PC-3 (cell line): ENCODE measurements at regions of chr1 and their contacts with region 1.

Region 1: DNA sequence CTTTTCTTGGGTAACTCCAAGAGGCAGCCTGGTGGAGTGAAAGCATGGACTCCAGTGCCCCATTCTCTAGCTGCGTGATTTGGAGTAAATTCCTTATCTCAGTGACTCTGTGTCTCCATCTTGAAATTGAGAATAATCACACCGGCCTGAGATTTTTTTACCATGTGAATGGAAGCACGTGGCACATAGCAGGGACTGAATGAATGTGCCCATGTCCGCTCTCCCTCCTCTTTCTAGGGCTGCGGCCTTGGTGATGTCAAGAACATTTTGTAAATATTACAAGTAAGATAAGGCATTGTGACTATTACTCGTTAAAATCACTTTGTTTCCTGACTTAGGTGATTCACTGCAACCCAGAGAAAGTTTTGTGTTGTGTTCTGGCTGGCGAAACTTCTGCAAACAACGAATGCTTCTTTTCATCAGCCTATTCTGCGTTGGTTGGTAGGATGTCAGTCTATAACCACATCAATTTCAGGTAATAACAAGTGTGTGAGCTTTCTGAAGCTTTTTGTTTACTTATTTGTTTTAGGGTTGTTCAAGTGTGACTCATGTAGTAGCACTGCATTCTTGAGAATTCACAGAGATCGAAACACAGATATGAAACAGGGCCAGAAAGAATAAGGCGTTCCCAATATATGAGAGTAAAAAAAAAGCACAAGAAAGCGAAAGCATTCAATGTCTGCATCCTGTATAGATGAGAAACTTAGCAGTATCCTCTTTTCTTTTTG is 135.7 kb upstream of the SLC45A1 start:
- DNase-seq: peak; percentile 98
- ATAC-seq: peak; percentile 90
- H3K4me3 ChIP-seq: no peak overlapping the region
- H3K27ac ChIP-seq: peak overlapping the region; percentile 99
- H3K4me1 ChIP-seq: peaks cover 27% of the 10 kb centered on the region
- H3K27me3 ChIP-seq: no peaks in the 10 kb centered on the region
- CTCF ChIP-seq: no peak

Region 2: DNA sequence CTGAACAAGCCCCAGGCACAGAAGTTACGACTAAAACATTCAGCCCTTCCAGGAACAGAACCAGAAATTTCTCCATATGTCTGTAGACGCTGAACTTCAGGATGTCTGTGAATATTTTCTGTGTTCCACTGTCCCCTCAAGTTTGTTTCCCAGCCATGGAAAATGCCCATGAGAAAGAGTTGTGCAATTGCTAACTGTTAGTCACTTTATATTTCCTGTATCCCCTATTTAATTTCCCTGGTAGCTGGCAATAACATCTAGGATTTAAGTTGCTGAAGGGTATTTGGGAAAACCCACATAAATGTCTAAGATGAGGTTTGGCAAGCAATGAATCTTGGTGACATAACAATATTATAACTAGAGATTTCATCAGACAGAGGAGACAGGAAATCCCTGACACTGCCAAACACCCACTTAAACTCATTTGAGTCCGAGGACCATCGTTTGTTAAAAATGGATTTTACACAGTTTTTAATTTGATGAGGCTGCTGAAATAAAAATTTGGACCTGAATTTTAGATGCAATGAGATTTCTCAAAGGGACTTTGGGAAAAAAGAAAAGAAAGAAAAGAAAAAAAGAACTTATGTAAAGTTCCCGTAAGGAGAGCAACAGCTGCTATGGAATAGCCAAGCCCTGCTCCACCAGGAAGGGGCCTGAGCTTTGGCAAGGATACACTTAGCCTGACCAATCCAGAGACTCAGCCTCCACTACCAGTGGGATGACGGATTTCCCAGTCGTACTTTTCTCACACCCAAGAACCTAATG is 134.3 kb before region 1 on chr1:
- CTCF ChIA-PET with region 1: no interaction called
- POLR2A ChIA-PET with region 1: no interaction called
- intact Hi-C with region 1: loop called (anchors 5 kb)
- DNase-seq: peak; percentile 94
- ATAC-seq: peak; percentile 74
- H3K4me3 ChIP-seq: peak overlapping the region; percentile 12; the same call in 1 of the 2 replicates
- H3K27ac ChIP-seq: peak overlapping the region; percentile 96
- H3K4me1 ChIP-seq: peaks cover 42% of the 10 kb centered on the region
- H3K27me3 ChIP-seq: no peaks in the 10 kb centered on the region
- CTCF ChIP-seq: no peak

Region 3: DNA sequence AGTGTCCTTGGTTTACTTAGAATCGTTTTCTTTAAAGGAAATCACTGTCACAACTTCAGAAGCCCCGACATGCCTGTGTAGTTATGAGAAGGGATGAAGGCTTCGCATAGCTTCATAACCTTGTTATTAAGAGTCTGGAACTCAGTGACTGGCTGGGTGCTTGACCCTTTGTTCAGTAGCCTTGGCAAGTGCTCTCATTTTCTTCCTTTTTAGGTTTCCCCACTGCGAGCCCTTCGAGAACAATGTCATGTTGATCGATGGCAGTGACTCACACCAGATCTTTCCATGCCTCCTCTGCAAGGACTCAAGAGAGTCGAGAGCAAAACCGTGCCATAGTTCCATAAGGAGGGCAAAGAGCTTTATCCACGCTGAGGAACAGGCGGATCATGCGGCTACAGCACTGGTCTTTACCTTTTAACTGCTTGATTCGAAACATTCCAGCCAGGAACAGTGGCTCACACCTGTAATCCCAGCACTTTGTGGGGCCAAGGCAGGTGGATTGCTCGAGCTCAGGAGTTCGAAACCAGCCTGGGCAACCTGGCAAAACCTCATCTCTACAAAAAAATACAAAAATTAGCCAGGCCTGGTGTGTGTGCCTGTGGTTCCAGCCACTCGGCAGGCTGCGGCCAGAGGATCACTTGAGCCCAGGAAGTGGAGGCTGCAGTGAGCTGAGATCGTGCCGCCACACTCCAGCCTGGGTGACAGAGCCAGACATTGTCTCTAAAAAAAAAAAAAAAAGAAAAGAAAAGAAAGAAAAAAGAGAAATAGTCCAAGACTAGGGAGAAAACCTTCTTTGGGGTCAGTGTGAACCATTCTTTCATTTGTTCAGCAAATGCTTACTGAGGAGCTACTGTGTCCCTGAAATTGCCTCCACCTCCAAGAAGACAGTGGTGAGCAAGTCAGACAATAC is 60.7 kb before region 1 on chr1:
- CTCF ChIA-PET with region 1: no interaction called
- POLR2A ChIA-PET with region 1: no interaction called
- intact Hi-C with region 1: no loop called
- DNase-seq: peak; percentile 45
- ATAC-seq: no peak
- H3K4me3 ChIP-seq: no peak overlapping the region
- H3K27ac ChIP-seq: peak overlapping the region; percentile 54
- H3K4me1 ChIP-seq: peaks cover 14% of the 10 kb centered on the region
- H3K27me3 ChIP-seq: no peaks in the 10 kb centered on the region
- CTCF ChIP-seq: no peak

Region 4: GRCh38 chr1:8197493-8198282 is 15.5 kb after region 1 on chr1:
- CTCF ChIA-PET with region 1: no interaction called
- POLR2A ChIA-PET with region 1: interaction called, 6 read pairs
- intact Hi-C with region 1: loop called (anchors 1 kb)
- DNase-seq: peak; percentile 96
- ATAC-seq: peak; percentile 63
- H3K4me3 ChIP-seq: no peak overlapping the region
- H3K27ac ChIP-seq: peak overlapping the region; percentile 98
- H3K4me1 ChIP-seq: peaks cover 61% of the 10 kb centered on the region
- H3K27me3 ChIP-seq: no peaks in the 10 kb centered on the region
- CTCF ChIP-seq: no peak

Region 5: DNA sequence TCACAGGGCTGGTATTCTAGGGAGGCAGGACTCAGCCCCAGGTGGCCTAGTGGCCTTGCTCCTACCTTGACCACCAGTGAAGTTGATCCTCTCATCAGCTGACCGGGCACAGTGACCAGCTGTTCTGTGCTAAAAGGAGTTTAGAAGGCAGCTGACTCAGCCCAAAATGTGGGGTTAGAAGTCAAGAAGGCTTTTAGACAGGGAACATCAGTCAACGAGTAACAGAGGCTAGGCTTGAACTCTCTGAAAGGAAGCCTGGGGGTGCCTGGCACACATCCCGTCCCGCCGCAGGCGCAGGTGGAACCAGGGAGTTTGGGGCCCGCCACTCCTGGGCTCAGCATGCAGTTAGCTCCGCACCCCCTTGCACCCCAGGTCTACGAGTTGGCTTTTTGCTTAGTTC is 20.9 kb after region 1 on chr1:
- CTCF ChIA-PET with region 1: interaction called, 5 read pairs
- POLR2A ChIA-PET with region 1: interaction called, 5 read pairs
- intact Hi-C with region 1: loop called (anchors 1 kb)
- DNase-seq: no peak
- ATAC-seq: no peak
- H3K4me3 ChIP-seq: no peak overlapping the region
- H3K27ac ChIP-seq: peak overlapping the region; percentile 98
- H3K4me1 ChIP-seq: peaks cover 53% of the 10 kb centered on the region
- H3K27me3 ChIP-seq: no peaks in the 10 kb centered on the region
- CTCF ChIP-seq: no peak

Region 6: DNA sequence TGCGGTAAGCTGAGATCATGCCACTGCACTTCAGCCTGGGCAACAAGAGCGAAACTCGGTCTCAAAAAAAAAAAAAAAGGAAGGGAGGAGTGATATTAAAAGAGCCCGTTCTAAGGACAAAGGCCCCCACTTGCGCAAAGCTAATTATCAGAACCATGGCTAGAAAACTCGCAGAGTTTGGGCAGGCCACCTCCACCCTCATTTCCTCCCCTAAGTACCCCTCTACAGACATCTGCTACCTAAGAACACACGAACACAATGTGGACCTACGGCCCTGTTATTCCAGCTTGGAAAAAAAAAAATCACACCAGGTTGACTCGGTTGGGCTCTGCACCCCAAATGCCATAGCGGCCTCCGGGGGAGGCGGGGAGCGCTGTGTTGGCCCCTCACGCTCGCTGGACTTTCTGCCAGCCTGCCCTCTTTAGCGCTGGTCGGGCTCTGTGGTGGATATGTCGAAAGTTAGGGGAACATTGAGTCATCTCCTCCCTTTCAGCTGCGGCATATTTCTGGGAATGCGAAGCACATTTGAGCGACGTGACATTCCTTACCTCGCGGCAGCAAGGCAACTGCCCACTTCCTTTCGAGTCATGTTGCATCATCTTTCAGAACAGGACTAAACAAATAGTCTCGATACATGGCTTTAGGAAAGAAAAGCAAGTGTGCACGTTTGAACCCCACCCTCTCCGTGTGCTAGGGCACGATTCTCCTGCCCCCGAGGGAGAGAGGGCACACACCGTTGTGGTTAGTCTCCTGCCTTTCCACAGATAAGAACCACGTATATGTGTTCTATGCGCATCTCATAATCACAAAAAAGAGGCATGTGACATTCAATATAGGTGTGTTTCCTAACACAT is 29.6 kb after region 1 on chr1:
- CTCF ChIA-PET with region 1: no interaction called
- POLR2A ChIA-PET with region 1: no interaction called
- intact Hi-C with region 1: loop called (anchors 1 kb)
- DNase-seq: peak; percentile 98
- ATAC-seq: peak; percentile 83
- H3K4me3 ChIP-seq: peak overlapping the region; percentile 22; the same call in 1 of the 2 replicates
- H3K27ac ChIP-seq: peak overlapping the region; percentile 98
- H3K4me1 ChIP-seq: peaks cover 33% of the 10 kb centered on the region
- H3K27me3 ChIP-seq: no peaks in the 10 kb centered on the region
- CTCF ChIP-seq: no peak

Region 7: GRCh38 chr1:8238851-8239305 is 56.7 kb after region 1 on chr1:
- CTCF ChIA-PET with region 1: no interaction called
- POLR2A ChIA-PET with region 1: no interaction called
- intact Hi-C with region 1: loop called (anchors 2 kb)
- DNase-seq: peak; percentile 66
- ATAC-seq: peak; percentile 55
- H3K4me3 ChIP-seq: peak overlapping the region; percentile 33; the same call in 1 of the 2 replicates
- H3K27ac ChIP-seq: peak overlapping the region; percentile 86
- H3K4me1 ChIP-seq: peaks cover 29% of the 10 kb centered on the region
- H3K27me3 ChIP-seq: no peaks in the 10 kb centered on the region
- CTCF ChIP-seq: peak; percentile 44; the same call in 1 of the 2 replicates

Region 8: GRCh38 chr1:8314346-8315280 is 132.4 kb after region 1 on chr1:
- CTCF ChIA-PET with region 1: no interaction called
- POLR2A ChIA-PET with region 1: interaction called, 3 read pairs
- intact Hi-C with region 1: loop called (anchors 5 kb)
- DNase-seq: peak; percentile 90
- ATAC-seq: peak; percentile 79
- H3K4me3 ChIP-seq: no peak overlapping the region
- H3K27ac ChIP-seq: peak overlapping the region; percentile 62
- H3K4me1 ChIP-seq: peaks cover 29% of the 10 kb centered on the region
- H3K27me3 ChIP-seq: no peaks in the 10 kb centered on the region
- CTCF ChIP-seq: peak; percentile 91